Naive thymus-derived CD8-positive, alpha-beta T cell (primary cell): ENCODE measurements at regions of chr16 and their contacts with region 1.

Region 1: DNA sequence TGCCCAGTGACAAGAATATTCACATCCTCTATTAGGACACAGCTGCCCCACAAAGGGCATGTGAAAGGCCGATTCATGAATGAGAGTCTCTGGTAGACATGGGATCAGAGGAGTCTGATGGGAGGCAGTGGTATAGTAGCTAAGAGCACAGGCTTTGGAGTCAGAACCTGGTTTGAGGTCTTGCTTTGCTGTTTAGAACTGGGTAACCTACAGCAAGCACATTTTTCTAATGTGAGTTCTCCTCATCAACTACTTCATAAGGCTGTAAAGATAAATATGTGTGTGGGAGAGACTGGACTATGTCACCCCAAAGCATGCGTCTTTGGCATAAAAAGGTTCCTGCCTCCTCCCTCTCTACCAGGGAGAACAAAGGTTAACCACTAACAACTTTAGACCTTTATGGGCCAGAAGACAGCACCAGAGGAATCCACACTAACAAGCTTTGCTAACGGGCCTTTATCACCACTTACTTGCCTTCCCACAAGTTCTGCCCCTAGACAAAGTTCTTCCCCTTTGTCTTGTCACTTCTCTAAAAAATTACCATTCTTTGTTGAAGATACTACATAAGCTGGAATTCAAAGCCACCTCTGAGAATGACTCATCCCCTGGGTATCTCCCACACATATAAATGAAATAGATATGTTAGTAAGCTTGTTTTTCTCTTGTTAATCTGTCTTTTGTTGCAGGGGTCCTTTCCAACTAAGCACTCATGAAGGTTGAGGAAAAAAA is 21.1 kb downstream of the CDR2 start:
- DNase-seq: peak in 2 of 10 donors; percentile 8 to 27
- ATAC-seq: peak in 1 of 2 donors; percentile 45
- H3K4me3 Mint-ChIP-seq: peak overlapping the region in 9 of 10 donors; percentile 20 to 54 (median 37)
- H3K27ac Mint-ChIP-seq: peak overlapping the region; percentile 45 to 91 (median 87)
- H3K4me1 Mint-ChIP-seq: peaks cover 14 to 72% (median 57%) of the 10 kb centered on the region in 4 donors
- H3K27me3 Mint-ChIP-seq: no peaks in the 10 kb centered on the region

Region 2: DNA sequence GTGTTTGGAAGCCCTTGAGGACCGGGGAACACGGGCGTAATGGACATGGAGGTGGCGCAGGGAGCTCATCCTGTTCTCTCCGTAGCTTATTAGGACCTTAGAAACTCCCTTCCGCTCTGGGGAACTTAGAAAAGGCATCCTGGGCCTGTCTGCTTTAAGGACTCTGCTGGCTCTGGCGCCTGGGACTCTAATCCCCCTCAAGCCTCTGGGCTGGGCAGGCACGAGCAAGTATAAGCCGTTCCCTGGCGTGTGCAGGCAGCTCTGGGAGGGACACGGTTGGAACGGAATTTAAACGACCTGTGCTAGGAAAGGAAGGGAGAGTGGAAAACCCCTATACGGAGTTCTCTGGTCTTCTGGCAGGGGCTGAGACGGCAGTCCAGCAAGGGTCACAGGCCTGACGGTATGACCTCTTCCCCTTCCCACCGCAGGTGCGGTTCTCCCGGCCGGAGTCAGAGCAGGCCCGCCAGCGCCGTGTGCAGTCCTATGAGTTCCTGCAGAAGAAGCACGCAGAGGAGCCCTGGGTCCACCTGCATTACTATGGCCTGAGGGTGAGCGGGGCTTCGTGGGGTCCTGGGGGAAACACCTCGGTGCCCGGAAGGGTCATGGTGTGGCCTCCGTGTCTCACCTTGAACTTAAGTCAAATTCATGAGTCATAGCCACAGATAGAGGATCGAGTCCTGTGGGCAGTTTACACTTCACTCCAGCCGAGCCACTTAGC is 38.5 kb before region 1 on chr16:
- POLR2A ChIA-PET with region 1: no interaction called
- DNase-seq: no peak
- ATAC-seq: no peak
- H3K4me3 Mint-ChIP-seq: peak overlapping the region in 1 of 10 donors; percentile 2
- H3K27ac Mint-ChIP-seq: peak overlapping the region in 2 of 10 donors; percentile 33 to 65
- H3K4me1 Mint-ChIP-seq: peaks cover 0 to 3% (median 1%) of the 10 kb centered on the region in 4 donors
- H3K27me3 Mint-ChIP-seq: no peaks in the 10 kb centered on the region

Region 3: GRCh38 chr16:22369221-22369811 is 16.0 kb after region 1 on chr16:
- POLR2A ChIA-PET with region 1: interaction called, 193 read pairs
- DNase-seq: peak in 2 of 10 donors; percentile 18 to 35
- ATAC-seq: no peak
- H3K4me3 Mint-ChIP-seq: peak overlapping the region; percentile 16 to 72 (median 56)
- H3K27ac Mint-ChIP-seq: peak overlapping the region; percentile 20 to 94 (median 84)
- H3K4me1 Mint-ChIP-seq: peaks cover 27 to 91% (median 79%) of the 10 kb centered on the region in 4 donors
- H3K27me3 Mint-ChIP-seq: no peaks in the 10 kb centered on the region

Region 4: DNA sequence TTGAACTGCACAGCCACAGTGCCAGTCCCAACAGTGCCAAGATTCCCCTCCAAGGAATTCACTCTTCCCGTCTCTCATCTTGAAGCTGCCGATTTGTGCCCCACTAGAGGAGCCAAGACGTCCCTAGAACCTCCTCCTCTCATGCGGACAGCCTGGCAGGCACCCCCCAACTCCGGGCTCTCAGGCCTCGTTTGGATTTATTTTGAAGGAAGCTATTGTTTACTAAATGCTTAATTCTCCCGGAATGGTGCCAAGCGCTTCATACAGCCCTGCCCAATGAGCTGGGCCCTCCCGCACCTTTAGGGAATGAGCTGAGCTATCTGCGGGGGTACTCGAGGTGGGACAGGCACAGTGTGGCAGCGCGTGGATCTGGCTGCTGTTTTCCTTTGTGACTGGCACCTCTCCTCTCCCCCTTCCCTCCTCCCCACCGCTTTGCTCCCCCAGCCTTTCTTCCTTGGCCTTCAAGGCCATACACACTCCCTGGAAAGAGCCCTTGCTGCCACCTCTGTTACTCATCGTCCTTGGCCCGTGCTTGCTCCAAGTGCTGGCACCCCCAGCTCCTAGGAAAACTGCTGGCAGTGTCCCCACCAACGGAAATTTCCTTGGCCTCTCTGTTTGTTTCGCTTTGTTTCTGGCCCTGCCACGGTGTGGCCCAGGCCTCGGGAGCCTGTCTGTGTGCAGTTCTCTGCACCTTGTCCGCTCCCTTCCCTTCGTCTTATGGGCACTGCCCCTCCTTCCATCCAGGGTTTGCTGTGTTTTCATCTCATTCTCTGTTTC is 71.0 kb after region 1 on chr16:
- POLR2A ChIA-PET with region 1: no interaction called
- DNase-seq: no peak
- ATAC-seq: no peak
- H3K4me3 Mint-ChIP-seq: no peak overlapping the region
- H3K27ac Mint-ChIP-seq: peak overlapping the region in 3 of 10 donors; percentile 39 to 80 (median 48)
- H3K4me1 Mint-ChIP-seq: peaks cover 0 to 5% (median 0%) of the 10 kb centered on the region in 4 donors
- H3K27me3 Mint-ChIP-seq: no peaks in the 10 kb centered on the region